Posterior cingulate gyrus (tissue), 11 donors: ENCODE measurements at regions of chr7 and their contacts with region 1.

Region 1: GRCh38 chr7:129664029-129665012 is 52.8 kb downstream of the NRF1 start:
- DNase-seq: no peak

Region 2: DNA sequence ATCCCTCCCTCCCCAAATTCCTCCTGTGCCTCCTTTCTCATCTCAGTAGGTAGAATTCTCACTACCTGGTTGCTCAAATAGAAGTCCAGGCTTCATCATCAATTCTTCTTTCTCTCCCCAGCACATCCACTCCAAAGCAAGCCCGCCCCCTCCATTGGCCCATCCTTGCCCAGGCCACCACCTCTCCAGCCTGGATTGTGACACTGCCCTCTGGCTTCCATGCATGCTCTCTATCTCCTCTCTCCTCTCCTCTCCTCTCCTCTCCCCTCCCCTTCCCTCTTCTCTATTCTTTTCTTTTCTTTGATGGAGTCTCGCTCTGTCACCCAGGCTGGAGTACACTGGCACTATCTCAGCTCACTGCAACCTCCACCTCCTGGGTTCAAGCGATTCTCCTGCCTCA is 143.5 kb after region 1 on chr7:
- intact Hi-C with region 1: no loop called
- DNase-seq: peak in 2 of 10 donors; percentile 6 to 18

Region 3: GRCh38 chr7:129825496-129826267 is 161.4 kb after region 1 on chr7:
- intact Hi-C with region 1: loop called (anchors 1 kb)
- DNase-seq: peak; percentile 71 to 97 (median 90)

Region 4: DNA sequence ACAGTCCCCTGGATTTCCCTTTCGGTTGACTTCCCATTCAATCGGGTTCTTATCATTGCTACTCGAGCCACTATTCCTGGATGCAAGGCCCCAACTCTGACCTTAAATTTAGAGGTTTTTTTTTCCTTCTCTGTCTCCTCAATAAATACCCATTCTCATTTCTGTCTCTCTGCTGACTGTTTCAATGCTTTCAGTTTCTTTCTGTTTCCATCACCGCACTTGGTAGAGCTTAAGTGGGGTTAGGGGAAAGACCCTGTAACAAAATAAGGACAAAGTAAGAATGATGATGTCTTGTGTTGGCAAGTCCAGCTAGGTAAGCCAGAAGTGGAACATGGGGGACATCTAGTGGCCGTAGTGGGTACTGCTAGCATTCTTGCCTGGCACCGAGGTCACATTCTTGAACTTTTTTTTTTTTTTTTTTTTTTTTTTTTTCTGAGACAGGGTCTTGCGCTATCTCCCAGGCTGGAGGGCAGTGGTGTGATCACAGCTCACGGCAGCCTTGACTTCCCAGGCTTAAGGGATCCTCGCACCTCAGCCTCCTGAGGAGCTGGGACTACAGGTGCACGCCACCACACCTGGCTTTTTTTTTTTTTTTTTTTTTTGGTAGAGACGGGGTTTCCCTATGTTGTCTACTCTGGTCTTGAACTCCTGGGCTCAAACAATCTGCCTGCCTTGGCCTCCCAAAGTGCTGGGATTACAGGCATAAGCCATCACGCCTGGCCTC is 346.5 kb after region 1 on chr7:
- intact Hi-C with region 1: loop called (anchors 2 kb)
- DNase-seq: peak; percentile 43 to 93 (median 82)